Colonic mucosa (tissue), 4 donors: ENCODE measurements at regions of chr2 and their contacts with region 1.

Region 1: DNA sequence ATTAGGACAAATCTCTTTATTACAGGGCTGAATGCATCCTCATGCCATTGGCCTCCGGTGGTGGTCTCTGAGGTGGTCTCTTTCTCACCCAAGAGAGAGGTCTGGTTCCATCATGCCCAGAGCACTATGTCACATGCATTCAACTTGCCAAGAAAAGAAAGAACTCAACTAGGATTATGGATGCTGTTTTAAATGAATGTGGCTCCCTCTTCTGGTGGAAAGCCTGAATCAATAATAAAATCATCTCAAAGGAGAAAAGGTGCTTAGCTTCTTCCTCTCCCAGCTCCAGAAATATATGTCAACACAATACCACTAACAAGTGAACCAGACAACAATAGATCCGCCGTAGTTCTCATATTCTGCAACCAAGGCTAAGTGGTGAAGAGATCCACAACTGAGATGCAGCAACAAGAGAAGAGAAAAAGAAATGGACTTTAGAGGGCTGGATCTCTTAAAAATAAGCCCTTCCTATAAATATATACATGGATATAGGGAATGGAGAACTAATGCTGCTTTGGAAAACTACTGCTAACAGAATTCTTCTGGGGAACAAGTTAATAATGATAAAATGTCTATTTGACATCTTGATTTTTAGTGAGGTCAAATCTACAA is 396.8 kb downstream of the NCKAP5 start:
- DNase-seq: peak; percentile 23
- H3K4me3 ChIP-seq: no peak overlapping the region
- H3K27ac ChIP-seq: no peak overlapping the region
- H3K4me1 ChIP-seq: no peaks in the 10 kb centered on the region
- H3K27me3 ChIP-seq: no peaks in the 10 kb centered on the region
- CTCF ChIP-seq: peak; percentile 54

Region 2: DNA sequence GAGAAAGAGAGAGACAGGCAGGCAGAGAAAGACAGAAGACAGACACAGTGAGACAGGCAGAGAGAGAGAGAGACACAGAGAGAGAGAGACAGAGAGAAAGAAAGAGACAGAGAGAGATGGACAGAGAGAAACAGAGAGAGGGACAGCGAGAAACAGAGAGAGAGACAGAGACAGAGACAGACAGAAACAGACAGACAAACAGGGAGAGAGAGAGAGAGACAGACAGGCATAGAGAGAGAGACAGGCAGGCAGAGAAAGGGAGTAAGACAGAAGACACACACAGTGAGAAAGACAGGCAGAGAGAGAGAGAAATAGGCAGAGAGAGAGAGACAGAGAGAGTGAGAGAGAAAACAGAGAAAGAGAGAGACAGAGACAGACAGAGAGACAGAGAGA is 904.4 kb before region 1 on chr2:
- intact Hi-C with region 1: loop called (anchors 5 kb)
- DNase-seq: no peak
- H3K4me3 ChIP-seq: no peak overlapping the region
- H3K27ac ChIP-seq: no peak overlapping the region
- H3K4me1 ChIP-seq: no peaks in the 10 kb centered on the region
- H3K27me3 ChIP-seq: no peaks in the 10 kb centered on the region
- CTCF ChIP-seq: no peak

Region 3: GRCh38 chr2:132547074-132547687 is 624.3 kb before region 1 on chr2:
- intact Hi-C with region 1: loop called (anchors 2 kb)
- DNase-seq: peak; percentile 78
- H3K4me3 ChIP-seq: no peak overlapping the region
- H3K27ac ChIP-seq: no peak overlapping the region
- H3K4me1 ChIP-seq: no peaks in the 10 kb centered on the region
- H3K27me3 ChIP-seq: no peaks in the 10 kb centered on the region
- CTCF ChIP-seq: peak; percentile 65

Region 4: GRCh38 chr2:133026536-133027177 is 144.8 kb before region 1 on chr2:
- intact Hi-C with region 1: no loop called
- DNase-seq: no peak
- H3K4me3 ChIP-seq: no peak overlapping the region
- H3K27ac ChIP-seq: no peak overlapping the region
- H3K4me1 ChIP-seq: no peaks in the 10 kb centered on the region
- H3K27me3 ChIP-seq: no peaks in the 10 kb centered on the region
- CTCF ChIP-seq: no peak

Region 5: DNA sequence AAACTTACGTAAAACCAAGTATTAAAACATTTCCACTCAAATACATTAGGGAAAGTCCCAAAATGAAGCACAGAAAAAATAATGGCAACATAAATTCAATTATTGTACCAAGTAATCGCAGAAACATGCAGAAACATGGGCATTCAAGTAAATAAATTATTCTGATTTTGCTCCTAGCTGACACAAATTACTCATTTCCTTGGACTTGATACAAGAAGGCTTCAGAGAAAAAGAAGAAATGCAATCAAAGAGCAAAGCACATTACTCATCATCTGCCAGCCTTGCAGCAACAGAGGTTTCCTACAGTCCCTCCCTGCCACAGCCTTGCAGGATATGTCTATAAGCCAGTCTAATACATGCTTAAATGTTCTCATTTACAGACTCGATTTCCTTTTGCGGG is 61.7 kb before region 1 on chr2:
- intact Hi-C with region 1: no loop called
- DNase-seq: no peak
- H3K4me3 ChIP-seq: no peak overlapping the region
- H3K27ac ChIP-seq: no peak overlapping the region
- H3K4me1 ChIP-seq: no peaks in the 10 kb centered on the region
- H3K27me3 ChIP-seq: no peaks in the 10 kb centered on the region
- CTCF ChIP-seq: no peak